ENCODE measurements at regions of chr5 and their contacts with region 1.

Region 1: DNA sequence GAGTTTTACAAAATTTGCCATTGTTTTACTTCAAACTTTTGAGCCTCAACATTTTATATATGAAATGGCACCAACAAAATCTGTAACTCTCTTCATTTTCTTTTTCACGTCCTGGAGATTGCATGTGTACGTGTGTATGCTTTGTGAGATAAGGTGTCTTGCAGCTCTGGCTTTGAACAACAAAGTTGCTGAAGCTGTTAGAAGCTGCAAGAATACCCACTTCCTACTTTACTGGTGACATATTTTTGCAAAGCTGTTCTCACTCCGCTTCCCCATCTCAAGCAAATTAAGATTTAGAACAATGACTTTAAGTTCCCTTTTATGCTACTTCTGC is 41.8 kb downstream of the FYB1 start:
- DNase-seq: peak in 7 of 9 donors; percentile 61 to 86 (median 79)
- ATAC-seq: peak; percentile 79
- H3K4me3 ChIP-seq: peak overlapping the region; percentile 46
- H3K4me3 Mint-ChIP-seq: peak overlapping the region; percentile 58 to 86 (median 80)
- H3K27ac ChIP-seq: peak overlapping the region; percentile 72
- H3K27ac Mint-ChIP-seq: peak overlapping the region; percentile 87 to 98 (median 96)
- H3K4me1 ChIP-seq: peaks cover 94 to 95% of the 10 kb centered on the region in 2 donors
- H3K4me1 Mint-ChIP-seq: peaks cover 84 to 100% (median 96%) of the 10 kb centered on the region in 7 donors
- H3K27me3 ChIP-seq: no peaks in the 10 kb centered on the region
- H3K27me3 Mint-ChIP-seq: no peaks in the 10 kb centered on the region

Region 2: DNA sequence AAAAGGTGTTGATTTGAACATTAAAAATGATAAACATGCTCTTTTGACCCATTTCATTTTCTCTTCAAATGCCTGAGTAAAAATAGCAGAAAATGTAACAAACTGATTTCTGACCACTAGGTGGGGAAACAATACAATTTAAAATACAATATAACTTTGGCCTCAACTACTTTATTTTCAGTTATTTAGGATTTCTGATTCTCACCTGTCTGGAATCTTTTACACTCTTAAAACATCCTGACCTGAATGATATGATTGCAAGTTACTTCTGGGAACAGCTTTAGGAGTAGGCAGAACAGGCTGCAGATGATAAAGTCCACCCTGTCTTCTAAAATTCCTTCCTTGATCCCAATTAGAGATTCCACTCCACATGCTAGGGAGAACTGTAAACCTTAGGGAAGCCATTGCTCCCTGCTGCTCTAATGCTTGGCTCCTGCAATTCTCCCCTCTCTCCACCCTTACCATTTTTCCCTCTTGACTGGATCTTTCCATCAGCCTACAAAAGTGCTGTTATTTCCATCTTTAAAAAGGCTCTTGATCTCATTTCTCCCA is 28.5 kb before region 1 on chr5:
- CTCF ChIA-PET with region 1: interaction called, 8 read pairs
- POLR2A ChIA-PET with region 1: interaction called, 14 read pairs
- intact Hi-C with region 1: loop called in 1 of 2 experiments (anchors 1 kb)
- DNase-seq: peak in 6 of 9 donors; percentile 28 to 55 (median 48)
- ATAC-seq: peak; percentile 44
- H3K4me3 ChIP-seq: no peak overlapping the region
- H3K4me3 Mint-ChIP-seq: peak overlapping the region in 6 of 10 donors; percentile 7 to 63 (median 36)
- H3K27ac ChIP-seq: peak overlapping the region; percentile 64
- H3K27ac Mint-ChIP-seq: peak overlapping the region; percentile 66 to 94 (median 82)
- H3K4me1 ChIP-seq: peaks cover 19 to 55% of the 10 kb centered on the region in 2 donors
- H3K4me1 Mint-ChIP-seq: peaks cover 58 to 90% (median 72%) of the 10 kb centered on the region in 7 donors
- H3K27me3 ChIP-seq: no peaks in the 10 kb centered on the region
- H3K27me3 Mint-ChIP-seq: no peaks in the 10 kb centered on the region

Region 3: GRCh38 chr5:39164529-39165402 is 12.8 kb before region 1 on chr5:
- CTCF ChIA-PET with region 1: interaction called, 7 read pairs
- POLR2A ChIA-PET with region 1: interaction called, 22 read pairs
- intact Hi-C with region 1: loop called (anchors 1 kb)
- DNase-seq: peak in 1 of 9 donors; percentile 34
- ATAC-seq: peak; percentile 71
- H3K4me3 ChIP-seq: peak overlapping the region; percentile 12
- H3K4me3 Mint-ChIP-seq: peak overlapping the region; percentile 58 to 83 (median 76)
- H3K27ac ChIP-seq: peak overlapping the region; percentile 60
- H3K27ac Mint-ChIP-seq: peak overlapping the region; percentile 78 to 96 (median 89)
- H3K4me1 ChIP-seq: peaks cover 73 to 74% of the 10 kb centered on the region in 2 donors
- H3K4me1 Mint-ChIP-seq: peaks cover 71 to 99% (median 95%) of the 10 kb centered on the region in 7 donors
- H3K27me3 ChIP-seq: no peaks in the 10 kb centered on the region
- H3K27me3 Mint-ChIP-seq: no peaks in the 10 kb centered on the region

Region 4: GRCh38 chr5:39194466-39195136 is 17.0 kb after region 1 on chr5:
- CTCF ChIA-PET with region 1: interaction called, 51 read pairs
- POLR2A ChIA-PET with region 1: interaction called, 679 read pairs
- intact Hi-C with region 1: loop called (anchors 1 kb)
- DNase-seq: peak in 1 of 9 donors; percentile 17
- ATAC-seq: no peak
- H3K4me3 ChIP-seq: peak overlapping the region; percentile 46
- H3K4me3 Mint-ChIP-seq: peak overlapping the region; percentile 75 to 98 (median 88)
- H3K27ac ChIP-seq: peak overlapping the region; percentile 83
- H3K27ac Mint-ChIP-seq: peak overlapping the region; percentile 85 to 98 (median 94)
- H3K4me1 ChIP-seq: peaks cover 67 to 69% of the 10 kb centered on the region in 2 donors
- H3K4me1 Mint-ChIP-seq: peaks cover 52 to 78% (median 70%) of the 10 kb centered on the region in 7 donors
- H3K27me3 ChIP-seq: no peaks in the 10 kb centered on the region
- H3K27me3 Mint-ChIP-seq: no peaks in the 10 kb centered on the region

Region 5: DNA sequence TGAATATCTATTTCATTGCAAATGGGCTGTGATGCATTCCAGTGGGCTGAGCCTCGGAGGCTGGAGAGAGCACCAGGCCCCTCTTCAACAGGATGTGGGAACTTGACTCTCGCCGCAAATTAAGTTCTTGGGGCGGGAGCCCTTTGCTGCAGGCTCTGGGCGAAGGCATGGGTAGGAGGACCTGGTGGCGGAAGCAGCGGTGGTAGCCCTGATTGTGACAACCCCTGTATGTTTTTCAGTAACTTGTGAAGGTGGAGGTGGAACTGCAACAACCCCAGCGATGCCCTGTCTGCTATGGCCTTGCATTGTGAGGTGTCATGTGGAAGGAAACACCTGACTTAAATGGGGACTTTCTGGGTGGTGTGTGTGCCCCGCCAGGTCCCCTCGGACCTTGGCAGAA is 32.3 kb after region 1 on chr5:
- CTCF ChIA-PET with region 1: interaction called, 5 read pairs
- POLR2A ChIA-PET with region 1: interaction called, 679 read pairs
- intact Hi-C with region 1: loop called (anchors 1 kb)
- DNase-seq: peak in 8 of 9 donors; percentile 77 to 86 (median 81)
- ATAC-seq: peak; percentile 84
- H3K4me3 ChIP-seq: peak overlapping the region; percentile 36
- H3K4me3 Mint-ChIP-seq: peak overlapping the region; percentile 70 to 98 (median 84)
- H3K27ac ChIP-seq: peak overlapping the region; percentile 93
- H3K27ac Mint-ChIP-seq: peak overlapping the region; percentile 93 to 99 (median 98)
- H3K4me1 ChIP-seq: peaks cover 91 to 98% of the 10 kb centered on the region in 2 donors
- H3K4me1 Mint-ChIP-seq: peaks cover 71 to 99% (median 95%) of the 10 kb centered on the region in 7 donors
- H3K27me3 ChIP-seq: no peaks in the 10 kb centered on the region
- H3K27me3 Mint-ChIP-seq: peaks cover 0 to 2% (median 0%) of the 10 kb centered on the region in 5 donors

Region 6: GRCh38 chr5:39253196-39253595 is 75.6 kb after region 1 on chr5:
- CTCF ChIA-PET with region 1: no interaction called
- POLR2A ChIA-PET with region 1: no interaction called
- intact Hi-C with region 1: no loop called
- DNase-seq: no peak
- ATAC-seq: no peak
- H3K4me3 ChIP-seq: no peak overlapping the region
- H3K4me3 Mint-ChIP-seq: no peak overlapping the region
- H3K27ac ChIP-seq: no peak overlapping the region
- H3K27ac Mint-ChIP-seq: no peak overlapping the region
- H3K4me1 ChIP-seq: peaks cover 0 to 13% of the 10 kb centered on the region in 2 donors
- H3K4me1 Mint-ChIP-seq: peaks cover 0 to 17% (median 13%) of the 10 kb centered on the region in 7 donors
- H3K27me3 ChIP-seq: no peaks in the 10 kb centered on the region
- H3K27me3 Mint-ChIP-seq: no peaks in the 10 kb centered on the region

Region 7: DNA sequence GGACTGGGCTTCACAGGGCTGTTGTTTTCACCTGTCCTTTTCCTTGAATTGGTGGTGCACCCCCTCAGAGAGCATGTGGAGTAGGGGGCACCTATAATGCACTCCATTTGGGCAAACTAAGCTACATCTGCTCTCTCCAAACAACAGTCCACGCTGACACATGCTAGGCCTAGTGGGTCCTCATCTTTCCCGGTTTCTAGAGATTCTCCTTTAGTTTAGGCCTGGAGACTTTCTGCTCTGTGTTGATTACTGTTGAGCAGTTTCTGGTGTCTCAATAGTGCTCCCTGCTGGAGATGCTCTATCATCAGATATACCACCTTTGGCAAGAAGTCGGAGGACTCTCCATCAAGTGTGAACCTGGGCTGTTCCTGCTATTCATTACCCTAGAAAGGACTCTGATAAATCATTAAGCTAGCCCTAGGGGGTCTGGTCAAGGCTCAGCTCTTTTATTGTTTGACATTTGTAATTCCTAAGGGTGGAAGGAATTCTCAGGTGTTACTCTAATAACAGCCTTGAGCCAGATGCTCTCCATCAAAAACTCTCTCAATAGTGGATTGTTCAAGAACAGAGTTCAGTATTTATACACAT is 105.7 kb after region 1 on chr5:
- CTCF ChIA-PET with region 1: interaction called, 13 read pairs
- POLR2A ChIA-PET with region 1: interaction called, 8 read pairs
- intact Hi-C with region 1: loop called in 1 of 2 experiments (anchors 1 kb)
- DNase-seq: peak; percentile 14 to 83 (median 73)
- ATAC-seq: peak; percentile 99
- H3K4me3 ChIP-seq: no peak overlapping the region
- H3K4me3 Mint-ChIP-seq: peak overlapping the region in 8 of 10 donors; percentile 8 to 66 (median 57)
- H3K27ac ChIP-seq: peak overlapping the region; percentile 3
- H3K27ac Mint-ChIP-seq: peak overlapping the region in 8 of 9 donors; percentile 66 to 98 (median 86)
- H3K4me1 ChIP-seq: peaks cover 4 to 7% of the 10 kb centered on the region in 2 donors
- H3K4me1 Mint-ChIP-seq: peaks cover 18 to 52% (median 46%) of the 10 kb centered on the region in 7 donors
- H3K27me3 ChIP-seq: no peaks in the 10 kb centered on the region
- H3K27me3 Mint-ChIP-seq: peaks cover 0 to 23% (median 8%) of the 10 kb centered on the region in 5 donors

Region 8: DNA sequence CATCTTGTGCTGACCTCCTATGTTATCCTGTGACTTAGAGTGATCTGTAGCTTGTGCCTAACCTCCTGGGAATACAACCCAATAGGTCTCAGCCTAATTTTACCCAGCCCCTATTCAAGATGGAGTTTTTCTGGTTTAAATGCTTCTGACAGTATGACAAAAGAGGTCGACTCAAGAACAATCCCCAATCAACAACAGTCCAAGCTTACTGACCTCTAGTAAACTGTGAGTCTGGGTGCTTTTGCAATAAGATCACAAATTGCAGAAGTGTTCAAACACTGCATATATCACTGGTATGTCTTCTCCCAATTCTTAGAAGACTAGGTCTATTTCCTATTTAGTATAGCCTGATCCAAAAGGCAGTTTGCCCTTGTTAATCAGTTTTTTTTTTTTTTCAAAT is 1178.7 kb after region 1 on chr5:
- CTCF ChIA-PET with region 1: no interaction called
- POLR2A ChIA-PET with region 1: no interaction called
- intact Hi-C with region 1: no loop called
- DNase-seq: no peak
- ATAC-seq: peak; percentile 81
- H3K4me3 ChIP-seq: no peak overlapping the region
- H3K4me3 Mint-ChIP-seq: no peak overlapping the region
- H3K27ac ChIP-seq: no peak overlapping the region
- H3K27ac Mint-ChIP-seq: no peak overlapping the region
- H3K4me1 ChIP-seq: peaks cover 0 to 22% of the 10 kb centered on the region in 2 donors
- H3K4me1 Mint-ChIP-seq: peaks cover 0 to 15% (median 2%) of the 10 kb centered on the region in 7 donors
- H3K27me3 ChIP-seq: no peaks in the 10 kb centered on the region
- H3K27me3 Mint-ChIP-seq: no peaks in the 10 kb centered on the region

Region 9: DNA sequence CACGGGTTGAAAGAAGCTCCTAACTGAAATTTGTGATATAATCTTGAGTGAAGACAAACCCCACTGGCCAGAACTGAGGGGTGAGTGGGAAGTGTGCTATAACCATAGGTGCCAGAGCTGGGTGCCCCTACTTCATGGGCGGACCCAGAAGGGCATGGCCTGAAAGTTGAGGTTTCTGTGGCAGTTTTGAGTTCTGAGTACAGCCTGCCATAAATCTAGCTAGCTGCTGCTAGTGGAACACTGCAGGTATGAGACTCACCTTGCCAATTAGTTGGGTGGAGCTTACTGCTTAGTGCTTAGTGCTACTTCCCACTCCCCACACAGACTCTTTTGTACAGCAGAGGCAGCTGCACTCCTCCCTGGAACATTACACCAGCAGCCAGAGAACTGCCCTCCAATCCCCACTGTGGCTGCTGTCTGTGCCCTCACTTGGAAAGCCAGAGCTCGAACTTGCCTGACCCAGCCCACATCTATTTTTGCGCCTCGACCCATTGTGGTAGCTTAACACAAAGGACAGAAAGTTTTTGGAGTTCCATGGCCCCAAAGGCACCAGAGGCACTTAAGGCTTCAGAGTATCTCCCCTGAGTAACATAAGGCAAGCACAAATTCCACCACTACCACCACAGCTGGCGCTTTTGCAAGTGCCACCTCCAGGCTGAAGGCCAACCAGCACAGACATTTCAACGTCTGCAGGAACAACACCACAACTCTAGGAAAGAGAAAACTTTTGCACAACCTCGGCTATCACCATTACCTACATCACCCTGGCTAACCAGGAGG is 1475.0 kb after region 1 on chr5:
- CTCF ChIA-PET with region 1: no interaction called
- POLR2A ChIA-PET with region 1: no interaction called
- intact Hi-C with region 1: loop called in 1 of 2 experiments (anchors 10 kb)
- DNase-seq: peak in 3 of 9 donors; percentile 25 to 37 (median 27)
- ATAC-seq: peak; percentile 50
- H3K4me3 ChIP-seq: peak overlapping the region; percentile 15
- H3K4me3 Mint-ChIP-seq: peak overlapping the region; percentile 39 to 88 (median 82)
- H3K27ac ChIP-seq: peak overlapping the region; percentile 74
- H3K27ac Mint-ChIP-seq: peak overlapping the region; percentile 89 to 96 (median 94)
- H3K4me1 ChIP-seq: peaks cover 48 to 54% of the 10 kb centered on the region in 2 donors
- H3K4me1 Mint-ChIP-seq: peaks cover 63 to 83% (median 78%) of the 10 kb centered on the region in 7 donors
- H3K27me3 ChIP-seq: no peaks in the 10 kb centered on the region
- H3K27me3 Mint-ChIP-seq: no peaks in the 10 kb centered on the region

Measured in naive thymus-derived CD4-positive, alpha-beta T cell (primary cell).